ENCODE measurements at regions of chr2 and their contacts with region 1.

Region 1: GRCh38 chr2:176135034-176135440 is 5.5 kb downstream of the HOXD8 start:
- DNase-seq: no peak
- ATAC-seq: no peak
- H3K4me3 ChIP-seq: no peak overlapping the region
- H3K27ac ChIP-seq: peak overlapping the region; percentile 77
- H3K4me1 ChIP-seq: peaks cover 15% of the 10 kb centered on the region
- H3K27me3 ChIP-seq: no peaks in the 10 kb centered on the region
- CTCF ChIP-seq: peak; percentile 29; the same call in 1 of the 2 replicates

Region 2: GRCh38 chr2:176234156-176234555 is 99.1 kb after region 1 on chr2:
- CTCF ChIA-PET with region 1: no interaction called
- POLR2A ChIA-PET with region 1: no interaction called
- in situ Hi-C with region 1: no loop called
- intact Hi-C with region 1: no loop called
- DNase-seq: no peak
- ATAC-seq: no peak
- H3K4me3 ChIP-seq: no peak overlapping the region
- H3K27ac ChIP-seq: no peak overlapping the region
- H3K4me1 ChIP-seq: no peaks in the 10 kb centered on the region
- H3K27me3 ChIP-seq: 0 out of 2 replicates have a peak, but pooled peaks cover 3% of the 10 kb centered on the region
- CTCF ChIP-seq: no peak

Region 3: GRCh38 chr2:176508984-176509740 is 374.1 kb after region 1 on chr2:
- CTCF ChIA-PET with region 1: no interaction called
- POLR2A ChIA-PET with region 1: no interaction called
- in situ Hi-C with region 1: no loop called
- intact Hi-C with region 1: no loop called
- DNase-seq: no peak
- ATAC-seq: no peak
- H3K4me3 ChIP-seq: no peak overlapping the region
- H3K27ac ChIP-seq: no peak overlapping the region
- H3K4me1 ChIP-seq: no peaks in the 10 kb centered on the region
- H3K27me3 ChIP-seq: no peaks in the 10 kb centered on the region
- CTCF ChIP-seq: no peak

Region 4: DNA sequence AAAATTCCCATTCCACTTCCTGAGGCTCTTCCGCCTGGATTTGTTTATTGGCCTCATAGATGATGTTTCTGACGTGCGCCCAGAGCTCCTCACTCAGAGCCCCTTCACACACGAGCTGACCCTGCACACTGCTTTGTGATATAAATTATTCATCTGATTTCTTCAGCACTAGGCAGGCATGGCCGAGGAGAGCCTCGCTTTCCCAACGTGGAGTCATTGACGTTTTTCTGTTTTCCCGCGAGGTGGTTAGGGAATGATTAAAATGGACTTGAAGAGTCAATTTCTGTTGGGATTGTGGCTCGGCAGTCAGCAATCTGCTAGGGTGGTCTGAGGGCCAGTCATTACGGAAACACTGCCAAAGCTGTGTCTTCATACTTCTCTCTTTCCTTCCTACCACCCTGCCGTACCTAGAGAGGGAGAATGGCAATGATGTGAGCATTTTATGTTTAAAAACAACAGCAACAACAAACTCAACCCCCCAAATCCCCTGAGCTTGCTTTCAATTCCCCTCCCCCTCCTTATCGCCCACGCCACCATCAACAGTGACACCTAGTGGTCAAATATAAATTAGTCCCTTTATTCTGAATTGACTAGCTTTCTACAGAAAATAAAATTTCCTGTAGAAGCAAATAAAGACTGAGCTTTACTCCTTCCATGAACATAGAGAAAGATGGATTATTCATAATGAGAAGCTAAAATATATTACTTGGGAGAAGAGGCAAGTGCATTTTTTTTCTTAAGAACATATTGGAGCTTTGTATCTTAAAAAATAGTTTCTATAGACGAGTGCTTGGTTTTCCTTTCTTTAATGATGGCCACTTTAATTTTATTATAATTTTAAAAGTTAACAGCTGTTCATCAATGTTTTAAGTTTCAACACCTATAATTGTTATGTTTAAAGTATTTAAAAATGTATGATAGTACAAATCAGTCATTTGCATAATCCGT is 419.3 kb after region 1 on chr2:
- CTCF ChIA-PET with region 1: interaction called, 14 read pairs
- POLR2A ChIA-PET with region 1: no interaction called
- in situ Hi-C with region 1: no loop called
- intact Hi-C with region 1: loop called (anchors 2 kb)
- DNase-seq: peak; percentile 32
- ATAC-seq: peak; percentile 78
- H3K4me3 ChIP-seq: peak overlapping the region; percentile 49 to 78
- H3K27ac ChIP-seq: peak overlapping the region; percentile 73
- H3K4me1 ChIP-seq: peaks cover 5% of the 10 kb centered on the region; the same call in 1 of the 2 replicates
- H3K27me3 ChIP-seq: no peaks in the 10 kb centered on the region
- CTCF ChIP-seq: peak; percentile 81

Measured in Panc1 (cell line).